ENCODE measurements at regions of chr3 and their contacts with region 1.

Region 1: DNA sequence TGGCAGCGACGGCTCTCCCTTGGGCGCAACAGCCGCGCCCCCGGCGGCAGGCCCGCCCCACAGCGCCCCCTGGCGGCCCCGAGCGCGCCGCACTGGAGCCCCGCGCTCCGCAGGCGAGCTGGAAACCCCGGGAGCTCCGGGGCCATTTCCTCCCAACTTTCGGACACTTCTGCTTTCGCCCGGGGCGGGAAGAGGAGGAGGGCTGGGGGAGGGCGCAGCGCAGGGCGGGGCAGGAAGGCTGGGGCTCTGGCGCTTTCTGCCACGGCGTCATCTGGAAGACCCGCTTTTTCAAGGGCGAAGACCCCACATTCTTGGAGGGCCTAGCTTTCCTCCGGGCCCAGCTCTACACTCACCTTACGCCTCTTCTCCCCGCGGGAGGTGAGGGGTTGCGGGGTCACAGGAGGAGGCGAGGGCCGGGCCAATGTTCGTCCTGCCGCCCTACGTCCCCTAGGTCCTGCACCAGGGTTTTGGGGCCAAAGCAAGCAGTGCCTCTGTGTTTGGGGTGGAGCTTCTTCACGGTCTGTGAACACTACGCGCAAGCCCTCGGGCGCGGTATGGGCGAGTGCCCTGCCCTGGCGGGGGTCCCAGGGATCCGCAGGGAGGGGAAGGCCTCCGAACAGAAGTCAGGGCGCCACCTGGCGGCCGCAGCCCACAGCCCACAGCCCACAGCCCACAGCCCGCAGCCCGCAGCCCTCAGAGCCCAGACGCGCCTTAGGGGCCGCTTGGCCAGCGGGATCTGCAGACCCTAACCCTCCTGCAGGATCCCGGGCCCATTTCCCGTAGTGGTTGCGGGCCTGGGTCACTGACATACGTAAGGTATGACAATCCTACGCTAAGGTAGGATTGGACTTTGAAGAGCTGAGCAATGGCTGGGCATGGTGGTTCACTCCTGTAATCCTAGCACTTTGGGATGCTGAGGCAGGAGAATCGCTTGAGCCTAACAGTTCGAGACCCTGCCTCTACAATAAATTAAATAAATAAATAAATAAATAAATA is 31.1 kb downstream of the FOXL2 start:
- DNase-seq: peak in 1 of 2 donors; percentile 91
- H3K4me3 ChIP-seq: peak overlapping the region; percentile 72 to 73
- H3K27ac ChIP-seq: peak overlapping the region; percentile 93
- H3K4me1 ChIP-seq: peaks cover 10% of the 10 kb centered on the region
- H3K27me3 ChIP-seq: no peaks in the 10 kb centered on the region
- CTCF ChIP-seq: peak; percentile 63 to 92 (median 86)
- POLR2A ChIP-seq: no peak

Region 2: DNA sequence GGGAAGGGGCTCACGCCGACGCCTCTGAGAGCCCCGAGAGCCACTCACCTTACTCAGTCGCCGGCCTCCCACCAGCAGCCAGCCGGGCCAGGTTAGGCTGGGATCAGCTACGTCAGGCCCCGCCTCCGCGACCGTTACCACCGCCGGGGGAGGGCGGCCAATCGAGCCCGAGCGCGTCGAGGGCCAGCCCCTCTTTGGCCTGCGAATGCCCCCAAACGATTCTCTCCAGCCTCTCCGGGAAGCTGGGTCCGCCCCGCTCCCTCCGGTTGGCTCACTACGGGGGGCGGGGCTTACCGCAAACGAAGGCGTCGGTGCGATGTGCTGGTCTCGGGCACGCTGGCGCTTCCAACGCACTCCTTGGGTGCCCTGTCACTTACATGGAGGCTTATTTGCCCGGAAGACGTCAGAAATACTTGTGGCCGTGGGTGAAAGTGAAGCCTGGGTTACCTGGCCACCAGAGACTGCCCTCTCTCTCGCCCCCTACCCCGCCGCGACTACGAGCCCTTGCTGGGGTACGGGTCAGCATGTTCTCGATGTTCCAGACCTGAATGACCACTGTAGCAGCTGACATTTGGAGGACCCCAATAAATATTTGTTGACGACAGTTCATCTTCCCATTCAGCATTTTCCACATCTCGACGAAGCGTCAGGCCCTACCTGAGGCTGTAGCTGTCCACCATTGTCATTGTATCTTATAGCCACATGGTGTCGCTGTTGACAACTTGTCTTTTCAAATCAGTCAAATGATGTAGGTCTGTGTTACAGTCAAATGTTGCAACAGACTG is 321.5 kb before region 1 on chr3 and contains the start of gene CEP70:
- intact Hi-C with region 1: loop called (anchors 1 kb)
- DNase-seq: peak in 1 of 2 donors; percentile 96
- H3K4me3 ChIP-seq: peak within 1 kb of the TSS; percentile 66
- H3K27ac ChIP-seq: peak within 1 kb of the TSS; percentile 92
- H3K4me1 ChIP-seq: peaks cover 18% of the 10 kb centered on the region
- H3K27me3 ChIP-seq: no peaks in the 10 kb centered on the region
- CTCF ChIP-seq: peak; percentile 72 to 92 (median 92)
- POLR2A ChIP-seq: peak; percentile 69 to 76
- total RNA-seq, gene CEP70: 31.7 TPM

Region 3: GRCh38 chr3:138696666-138697370 is 219.0 kb before region 1 on chr3:
- intact Hi-C with region 1: loop called (anchors 5 kb)
- DNase-seq: no peak
- H3K4me3 ChIP-seq: no peak overlapping the region
- H3K27ac ChIP-seq: no peak overlapping the region
- H3K4me1 ChIP-seq: peaks cover 6% of the 10 kb centered on the region
- H3K27me3 ChIP-seq: no peaks in the 10 kb centered on the region
- CTCF ChIP-seq: no peak
- POLR2A ChIP-seq: no peak

Region 4: GRCh38 chr3:138761002-138761401 is 154.8 kb before region 1 on chr3:
- intact Hi-C with region 1: no loop called
- DNase-seq: no peak
- H3K4me3 ChIP-seq: no peak overlapping the region
- H3K27ac ChIP-seq: no peak overlapping the region
- H3K4me1 ChIP-seq: no peaks in the 10 kb centered on the region
- H3K27me3 ChIP-seq: no peaks in the 10 kb centered on the region
- CTCF ChIP-seq: no peak
- POLR2A ChIP-seq: no peak

Measured in vagina (tissue), 2 donors.